CD8-positive, alpha-beta T cell (primary cell): ENCODE measurements at regions of chr13 and their contacts with region 1.

Region 1: DNA sequence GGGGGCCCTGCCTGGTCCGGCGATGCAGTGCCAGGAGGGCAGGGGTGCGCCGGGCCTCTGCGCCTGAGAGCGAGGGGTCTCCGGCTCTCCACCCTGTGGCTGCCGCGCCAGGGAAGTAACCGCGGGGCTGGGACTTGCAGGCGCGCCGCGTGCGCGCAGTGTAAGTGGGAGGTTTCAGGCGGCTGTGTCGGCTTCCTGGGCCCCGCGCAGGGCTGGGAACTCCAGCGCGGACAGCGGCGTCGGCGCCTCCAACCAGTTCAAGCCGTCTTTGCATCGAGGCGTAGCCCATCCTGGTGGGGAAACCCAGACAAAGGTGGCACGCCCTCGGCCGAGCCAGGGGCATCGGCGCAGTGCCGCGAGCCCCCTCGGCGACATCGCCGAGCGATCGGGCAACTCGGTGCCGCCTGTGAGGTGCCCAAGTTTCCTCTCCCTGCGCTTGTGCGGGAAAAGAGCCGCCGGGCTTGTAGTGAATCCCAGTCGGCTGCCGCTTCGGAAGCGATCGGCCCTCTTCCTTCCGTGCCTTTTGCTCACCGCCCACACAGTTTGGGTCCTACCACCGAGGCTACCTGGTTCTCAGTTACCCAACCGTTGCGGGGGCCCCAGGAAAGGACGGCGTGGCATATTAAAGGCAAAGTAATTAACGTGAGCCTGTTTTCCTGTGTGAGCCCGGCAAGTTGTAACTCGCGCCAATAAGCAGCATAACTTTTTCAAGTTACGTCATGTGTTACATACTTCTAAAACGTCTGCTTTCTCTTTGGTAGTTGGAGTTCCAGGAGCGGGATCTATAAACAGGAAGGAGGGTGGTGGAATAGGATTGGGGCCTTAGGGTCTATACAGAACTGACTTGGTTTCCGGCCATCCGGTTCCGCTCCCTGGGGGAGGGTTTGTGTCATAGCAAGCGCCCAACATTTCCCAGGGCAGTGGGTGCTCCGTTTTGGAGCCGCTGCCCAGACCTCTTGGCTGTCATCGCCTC is 1.2 kb downstream of the LRCH1 start:
- DNase-seq: peak; percentile 29 to 91 (median 66)
- ATAC-seq: peak; percentile 54
- H3K4me3 ChIP-seq: peak overlapping the region; percentile 87 to 95
- H3K4me3 Mint-ChIP-seq: peak overlapping the region; percentile 93
- H3K27ac ChIP-seq: peak overlapping the region; percentile 70 to 83
- H3K27ac Mint-ChIP-seq: peak overlapping the region; percentile 94
- H3K4me1 ChIP-seq: peaks cover 28% of the 10 kb centered on the region
- H3K4me1 Mint-ChIP-seq: peaks cover 53% of the 10 kb centered on the region
- H3K27me3 ChIP-seq: no peaks in the 10 kb centered on the region
- H3K27me3 Mint-ChIP-seq: no peaks in the 10 kb centered on the region
- CTCF ChIP-seq: no peak

Region 2: DNA sequence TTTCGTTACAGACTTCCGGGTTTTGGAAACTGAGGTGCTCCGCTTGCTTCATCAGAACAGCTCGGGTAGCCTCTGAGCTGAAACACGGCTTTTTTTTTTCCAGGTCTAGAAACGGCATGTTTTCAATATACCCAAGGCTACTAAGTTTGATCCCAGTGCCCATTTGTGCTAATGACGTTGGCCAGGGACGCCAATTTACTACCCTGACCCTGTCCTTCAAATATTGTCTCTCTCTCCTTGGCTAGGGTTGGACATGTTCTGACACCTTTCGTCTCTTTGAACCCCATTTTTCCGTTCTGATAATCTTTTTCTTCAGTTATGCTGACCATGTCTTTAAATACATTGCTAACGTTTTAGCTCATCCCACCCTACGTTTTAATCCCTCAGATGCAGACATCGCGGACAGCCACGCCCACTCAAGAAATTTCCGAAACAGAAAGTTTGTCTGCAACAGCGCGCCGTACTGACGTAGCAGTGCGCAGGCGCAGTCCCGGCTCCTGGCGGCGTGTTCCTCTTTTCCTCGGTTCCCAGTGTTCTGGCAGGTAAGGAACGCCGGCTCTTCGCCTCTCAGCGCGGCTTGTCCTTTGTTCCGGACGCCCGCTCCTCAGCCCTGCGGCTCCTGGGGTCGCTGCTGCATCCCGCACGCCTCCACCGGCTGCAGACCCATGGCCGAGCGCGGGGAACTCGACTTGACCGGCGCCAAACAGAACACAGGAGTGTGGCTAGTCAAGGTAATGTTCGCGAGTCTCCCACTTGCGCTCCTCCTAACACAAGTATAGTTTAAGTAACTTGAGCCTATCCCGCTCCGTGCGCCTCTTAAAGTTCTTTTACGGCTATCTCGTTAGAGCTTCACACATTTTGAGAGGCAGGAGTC is 1433.9 kb before region 1 on chr13 and contains the start of gene GTF2F2:
- CTCF ChIA-PET with region 1: no interaction called
- POLR2A ChIA-PET with region 1: no interaction called
- intact Hi-C with region 1: loop called in 1 of 2 experiments (anchors 2 kb)
- DNase-seq: peak; percentile 73 to 94 (median 88)
- ATAC-seq: peak; percentile 65
- H3K4me3 ChIP-seq: peak within 1 kb of the TSS; percentile 70 to 93
- H3K4me3 Mint-ChIP-seq: no peak within 1 kb of the TSS
- H3K27ac ChIP-seq: peak within 1 kb of the TSS; percentile 93 to 97
- H3K27ac Mint-ChIP-seq: no peak within 1 kb of the TSS
- H3K4me1 ChIP-seq: peaks cover 22% of the 10 kb centered on the region
- H3K4me1 Mint-ChIP-seq: peaks cover 20% of the 10 kb centered on the region
- H3K27me3 ChIP-seq: no peaks in the 10 kb centered on the region
- H3K27me3 Mint-ChIP-seq: no peaks in the 10 kb centered on the region
- CTCF ChIP-seq: no peak
- total RNA-seq, gene GTF2F2: 13.2 to 14.8 TPM

Region 3: DNA sequence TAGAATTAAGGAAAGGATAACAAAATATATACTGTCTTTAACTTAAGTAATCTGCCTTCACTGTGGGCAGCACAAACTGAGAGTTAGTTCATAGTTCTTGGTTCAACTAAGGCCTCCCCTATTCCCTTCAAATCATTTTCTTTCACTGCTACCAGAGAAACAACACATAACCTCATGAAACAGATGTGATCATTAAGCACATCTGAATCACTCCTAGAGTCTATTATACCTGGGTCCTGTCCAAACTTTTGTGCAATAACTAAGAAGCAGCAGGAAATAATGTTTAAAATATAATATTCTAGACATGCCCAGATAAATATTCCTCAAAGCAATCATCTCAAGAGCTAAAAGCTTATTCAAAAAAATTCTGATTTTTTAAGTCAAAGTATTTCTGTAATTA is 564.6 kb before region 1 on chr13:
- CTCF ChIA-PET with region 1: no interaction called
- POLR2A ChIA-PET with region 1: no interaction called
- intact Hi-C with region 1: no loop called
- DNase-seq: no peak
- ATAC-seq: no peak
- H3K4me3 ChIP-seq: no peak overlapping the region
- H3K4me3 Mint-ChIP-seq: no peak overlapping the region
- H3K27ac ChIP-seq: no peak overlapping the region
- H3K27ac Mint-ChIP-seq: peak overlapping the region; percentile 33
- H3K4me1 ChIP-seq: no peaks in the 10 kb centered on the region
- H3K4me1 Mint-ChIP-seq: peaks cover 7% of the 10 kb centered on the region
- H3K27me3 ChIP-seq: no peaks in the 10 kb centered on the region
- H3K27me3 Mint-ChIP-seq: no peaks in the 10 kb centered on the region
- CTCF ChIP-seq: no peak

Region 4: GRCh38 chr13:46345398-46345797 is 208.8 kb before region 1 on chr13:
- CTCF ChIA-PET with region 1: no interaction called
- POLR2A ChIA-PET with region 1: no interaction called
- intact Hi-C with region 1: no loop called
- DNase-seq: no peak
- ATAC-seq: no peak
- H3K4me3 ChIP-seq: no peak overlapping the region
- H3K4me3 Mint-ChIP-seq: no peak overlapping the region
- H3K27ac ChIP-seq: no peak overlapping the region
- H3K27ac Mint-ChIP-seq: no peak overlapping the region
- H3K4me1 ChIP-seq: peaks cover 14% of the 10 kb centered on the region
- H3K4me1 Mint-ChIP-seq: peaks cover 18% of the 10 kb centered on the region
- H3K27me3 ChIP-seq: peaks cover 0 to 4% of the 10 kb centered on the region in 2 experiments
- H3K27me3 Mint-ChIP-seq: no peaks in the 10 kb centered on the region
- CTCF ChIP-seq: no peak

Region 5: GRCh38 chr13:46359750-46360149 is 194.4 kb before region 1 on chr13:
- CTCF ChIA-PET with region 1: no interaction called
- POLR2A ChIA-PET with region 1: no interaction called
- intact Hi-C with region 1: no loop called
- DNase-seq: no peak
- ATAC-seq: no peak
- H3K4me3 ChIP-seq: no peak overlapping the region
- H3K4me3 Mint-ChIP-seq: no peak overlapping the region
- H3K27ac ChIP-seq: no peak overlapping the region
- H3K27ac Mint-ChIP-seq: no peak overlapping the region
- H3K4me1 ChIP-seq: no peaks in the 10 kb centered on the region
- H3K4me1 Mint-ChIP-seq: peaks cover 2% of the 10 kb centered on the region
- H3K27me3 ChIP-seq: no peaks in the 10 kb centered on the region
- H3K27me3 Mint-ChIP-seq: no peaks in the 10 kb centered on the region
- CTCF ChIP-seq: no peak

Region 6: GRCh38 chr13:46542833-46543232 is 11.3 kb before region 1 on chr13:
- CTCF ChIA-PET with region 1: interaction called, 14 read pairs
- POLR2A ChIA-PET with region 1: no interaction called
- intact Hi-C with region 1: no loop called
- DNase-seq: peak in 2 of 9 experiments; percentile 13 to 48
- ATAC-seq: peak; percentile 44
- H3K4me3 ChIP-seq: no peak overlapping the region
- H3K4me3 Mint-ChIP-seq: no peak overlapping the region
- H3K27ac ChIP-seq: no peak overlapping the region
- H3K27ac Mint-ChIP-seq: no peak overlapping the region
- H3K4me1 ChIP-seq: no peaks in the 10 kb centered on the region
- H3K4me1 Mint-ChIP-seq: peaks cover 4% of the 10 kb centered on the region
- H3K27me3 ChIP-seq: no peaks in the 10 kb centered on the region
- H3K27me3 Mint-ChIP-seq: no peaks in the 10 kb centered on the region
- CTCF ChIP-seq: no peak

Region 7: GRCh38 chr13:46668302-46668720 is 114.1 kb after region 1 on chr13:
- CTCF ChIA-PET with region 1: interaction called, 8 read pairs
- POLR2A ChIA-PET with region 1: interaction called, 3 read pairs
- intact Hi-C with region 1: loop called in 1 of 2 experiments (anchors 5 kb)
- DNase-seq: peak in 1 of 9 experiments; percentile 41
- ATAC-seq: peak; percentile 24
- H3K4me3 ChIP-seq: peak overlapping the region; percentile 51 to 58
- H3K4me3 Mint-ChIP-seq: peak overlapping the region; percentile 84
- H3K27ac ChIP-seq: peak overlapping the region; percentile 45 to 79
- H3K27ac Mint-ChIP-seq: peak overlapping the region; percentile 89
- H3K4me1 ChIP-seq: peaks cover 25% of the 10 kb centered on the region
- H3K4me1 Mint-ChIP-seq: peaks cover 39% of the 10 kb centered on the region
- H3K27me3 ChIP-seq: no peaks in the 10 kb centered on the region
- H3K27me3 Mint-ChIP-seq: no peaks in the 10 kb centered on the region
- CTCF ChIP-seq: no peak

Region 8: DNA sequence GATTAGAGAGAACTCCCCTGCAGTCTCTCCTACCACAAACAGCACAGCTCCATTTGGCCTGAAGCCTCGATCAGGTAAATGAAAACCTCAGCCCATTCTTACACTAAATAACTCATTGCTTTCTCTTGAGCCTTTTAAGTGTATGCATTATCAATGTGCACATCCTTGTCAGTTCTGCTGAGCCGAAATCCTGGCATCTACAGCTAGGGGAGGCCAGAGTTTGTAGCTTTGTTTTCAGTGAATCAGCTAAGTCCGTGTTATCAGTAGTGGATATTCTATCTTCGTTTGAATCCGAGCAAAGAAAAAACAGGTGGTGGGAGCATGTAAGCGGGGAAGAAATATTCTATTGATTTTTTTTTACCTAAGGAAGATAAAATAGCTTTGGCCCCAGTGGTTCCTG is 158.4 kb after region 1 on chr13:
- CTCF ChIA-PET with region 1: interaction called, 94 read pairs
- POLR2A ChIA-PET with region 1: interaction called, 4 read pairs
- intact Hi-C with region 1: no loop called
- DNase-seq: no peak
- ATAC-seq: no peak
- H3K4me3 ChIP-seq: no peak overlapping the region
- H3K4me3 Mint-ChIP-seq: no peak overlapping the region
- H3K27ac ChIP-seq: no peak overlapping the region
- H3K27ac Mint-ChIP-seq: no peak overlapping the region
- H3K4me1 ChIP-seq: no peaks in the 10 kb centered on the region
- H3K4me1 Mint-ChIP-seq: no peaks in the 10 kb centered on the region
- H3K27me3 ChIP-seq: no peaks in the 10 kb centered on the region
- H3K27me3 Mint-ChIP-seq: no peaks in the 10 kb centered on the region
- CTCF ChIP-seq: no peak

Region 9: GRCh38 chr13:46796515-46797474 is 242.6 kb after region 1 on chr13 and contains the start of gene ESD:
- CTCF ChIA-PET with region 1: interaction called, 9 read pairs
- POLR2A ChIA-PET with region 1: interaction called, 3 read pairs
- intact Hi-C with region 1: loop called (anchors 1 to 5 kb)
- DNase-seq: peak; percentile 74 to 92 (median 89)
- ATAC-seq: peak; percentile 94
- H3K4me3 ChIP-seq: peak within 1 kb of the TSS; percentile 76 to 93
- H3K4me3 Mint-ChIP-seq: peak within 1 kb of the TSS; percentile 99
- H3K27ac ChIP-seq: peak within 1 kb of the TSS; percentile 71 to 77
- H3K27ac Mint-ChIP-seq: peak within 1 kb of the TSS; percentile 99
- H3K4me1 ChIP-seq: peaks cover 35% of the 10 kb centered on the region
- H3K4me1 Mint-ChIP-seq: peaks cover 44% of the 10 kb centered on the region
- H3K27me3 ChIP-seq: no peaks in the 10 kb centered on the region
- H3K27me3 Mint-ChIP-seq: no peaks in the 10 kb centered on the region
- CTCF ChIP-seq: no peak
- total RNA-seq, gene ESD: 30.5 to 31.0 TPM